Endothelial cell of umbilical vein (primary cell): ENCODE measurements at regions of chr3 and their contacts with region 1.

Region 1: GRCh38 chr3:161069511-161070263 is 35.5 kb downstream of the B3GALNT1 start:
- DNase-seq: peak; percentile 98
- H3K4me3 ChIP-seq: no peak overlapping the region
- H3K27ac ChIP-seq: peak overlapping the region; percentile 70
- H3K4me1 ChIP-seq: peaks cover 29% of the 10 kb centered on the region
- H3K27me3 ChIP-seq: no peaks in the 10 kb centered on the region
- CTCF ChIP-seq: no peak
- POLR2A ChIP-seq: peak; percentile 43

Region 2: DNA sequence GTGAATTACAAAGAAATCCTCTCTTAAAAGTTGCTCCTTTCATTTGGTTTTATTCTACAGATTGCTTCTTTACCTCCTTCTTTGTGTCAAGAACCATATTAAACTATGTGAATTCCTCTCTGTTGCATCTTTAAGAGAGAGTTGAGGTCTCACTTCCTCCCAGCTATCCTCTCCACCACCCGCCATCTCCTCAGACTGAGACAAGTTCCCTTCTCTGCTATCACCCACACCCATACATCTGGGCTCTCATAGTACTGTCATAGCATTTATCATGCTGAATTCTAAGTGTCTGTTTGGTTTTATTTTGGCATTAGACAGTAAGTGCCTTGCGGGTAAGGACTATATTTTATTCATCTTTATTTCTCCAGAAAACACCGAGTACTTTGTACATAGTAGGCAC is 18.8 kb before region 1 on chr3:
- CTCF ChIA-PET with region 1: interaction called, 11 read pairs
- POLR2A ChIA-PET with region 1: no interaction called
- dilution Hi-C with region 1: no loop called
- intact Hi-C with region 1: no loop called
- DNase-seq: no peak
- H3K4me3 ChIP-seq: no peak overlapping the region
- H3K27ac ChIP-seq: no peak overlapping the region
- H3K4me1 ChIP-seq: no peaks in the 10 kb centered on the region
- H3K27me3 ChIP-seq: no peaks in the 10 kb centered on the region
- CTCF ChIP-seq: no peak
- POLR2A ChIP-seq: no peak

Region 3: DNA sequence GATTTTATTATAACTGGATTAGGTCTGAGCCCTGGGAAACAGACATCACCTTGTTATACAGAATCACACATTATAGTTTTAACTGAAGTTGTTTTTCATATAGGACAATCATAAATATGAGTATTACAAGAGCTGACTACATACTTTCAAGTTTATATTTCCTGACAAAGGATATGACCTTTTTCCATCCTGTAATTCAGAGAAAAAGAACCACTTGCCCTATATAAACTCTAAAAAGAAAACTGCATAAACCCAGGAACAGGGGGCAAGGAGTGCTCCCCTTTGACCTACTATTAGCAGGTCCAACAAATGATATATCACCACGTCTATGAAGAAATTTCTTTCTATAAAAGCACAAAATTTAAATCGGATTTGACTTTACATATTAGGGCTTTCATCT is 14.6 kb after region 1 on chr3:
- CTCF ChIA-PET with region 1: interaction called, 8 read pairs
- POLR2A ChIA-PET with region 1: interaction called, 6 read pairs
- dilution Hi-C with region 1: no loop called
- intact Hi-C with region 1: loop called (anchors 1 kb)
- DNase-seq: peak; percentile 55
- H3K4me3 ChIP-seq: no peak overlapping the region
- H3K27ac ChIP-seq: peak overlapping the region; percentile 13
- H3K4me1 ChIP-seq: peaks cover 23% of the 10 kb centered on the region
- H3K27me3 ChIP-seq: no peaks in the 10 kb centered on the region
- CTCF ChIP-seq: no peak
- POLR2A ChIP-seq: no peak

Region 4: DNA sequence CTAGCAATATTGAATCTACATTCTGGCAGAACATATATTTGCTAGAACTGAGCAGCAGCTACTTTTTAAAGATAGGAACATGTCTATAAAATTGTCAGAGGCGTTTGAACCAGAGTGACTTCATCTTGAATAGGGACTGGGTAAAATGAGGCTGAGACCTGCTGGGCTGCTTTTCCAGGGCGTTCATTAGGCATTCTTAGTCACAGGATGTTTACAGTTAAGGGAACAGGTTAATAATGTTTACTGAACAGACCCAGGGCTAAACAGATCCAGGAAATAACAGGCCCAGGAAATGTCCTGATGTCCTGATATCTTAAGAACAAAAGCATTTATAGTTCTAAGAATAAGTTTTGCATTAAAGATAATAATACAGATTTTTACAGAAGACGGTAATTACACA is 70.0 kb after region 1 on chr3:
- CTCF ChIA-PET with region 1: no interaction called
- POLR2A ChIA-PET with region 1: no interaction called
- dilution Hi-C with region 1: no loop called
- intact Hi-C with region 1: no loop called
- DNase-seq: peak; percentile 14
- H3K4me3 ChIP-seq: no peak overlapping the region
- H3K27ac ChIP-seq: no peak overlapping the region
- H3K4me1 ChIP-seq: peaks cover 14% of the 10 kb centered on the region
- H3K27me3 ChIP-seq: no peaks in the 10 kb centered on the region
- CTCF ChIP-seq: no peak
- POLR2A ChIP-seq: no peak